ENCODE measurements at regions of chr3 and their contacts with region 1.

Region 1: GRCh38 chr3:49120438-49121131 is at the start of gene USP19:
- DNase-seq: peak; percentile 88 to 91
- ATAC-seq: peak; percentile 95 to 97
- H3K4me3 ChIP-seq: peak within 1 kb of the TSS; percentile 93
- H3K27ac ChIP-seq: peak within 1 kb of the TSS; percentile 93 to 99
- H3K4me1 ChIP-seq: peaks cover 14% of the 10 kb centered on the region
- CTCF ChIP-seq: no peak
- EP300 ChIP-seq: no peak
- POLR2A ChIP-seq: peak; percentile 62
- RAD21 ChIP-seq: no peak
- polyA plus RNA-seq, gene USP19: 28.8 and 30.5 TPM in 2 replicates

Region 2: GRCh38 chr3:49058011-49058410 is 62.6 kb before region 1 on chr3:
- CTCF ChIA-PET with region 1: no interaction called
- POLR2A ChIA-PET with region 1: no interaction called
- DNase-seq: no peak
- ATAC-seq: no peak
- H3K4me3 ChIP-seq: no peak overlapping the region
- H3K27ac ChIP-seq: no peak overlapping the region
- H3K4me1 ChIP-seq: no peaks in the 10 kb centered on the region
- CTCF ChIP-seq: no peak
- EP300 ChIP-seq: no peak
- POLR2A ChIP-seq: no peak
- RAD21 ChIP-seq: no peak

Region 3: DNA sequence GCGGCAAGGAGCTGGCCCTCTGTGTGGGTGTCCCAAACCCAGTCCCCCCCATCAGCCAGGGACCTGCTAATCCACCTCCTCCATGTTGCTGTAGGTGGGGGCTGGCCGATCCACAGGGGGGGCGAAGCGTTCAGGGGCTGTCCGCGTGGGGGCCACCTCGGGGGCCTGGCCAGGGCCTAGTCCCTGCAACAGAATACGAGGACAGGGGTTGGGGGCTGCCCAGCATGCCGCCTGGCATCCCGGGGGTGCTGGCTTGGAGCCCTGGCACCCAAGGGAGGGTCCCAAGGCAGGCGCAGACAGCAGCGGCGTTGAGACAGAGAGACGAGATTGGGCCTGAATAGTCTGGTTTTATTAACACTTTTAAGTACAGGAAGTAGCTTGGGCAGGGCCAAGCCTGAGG is 12.2 kb before region 1 on chr3:
- CTCF ChIA-PET with region 1: no interaction called
- POLR2A ChIA-PET with region 1: interaction called, 12 read pairs
- DNase-seq: no peak
- ATAC-seq: no peak
- H3K4me3 ChIP-seq: no peak overlapping the region
- H3K27ac ChIP-seq: no peak overlapping the region
- H3K4me1 ChIP-seq: peaks cover 5% of the 10 kb centered on the region; the same call in 1 of the 3 replicates
- CTCF ChIP-seq: no peak
- EP300 ChIP-seq: no peak
- POLR2A ChIP-seq: no peak
- RAD21 ChIP-seq: no peak

Region 4: GRCh38 chr3:49133226-49133951 is 12.8 kb after region 1 on chr3:
- CTCF ChIA-PET with region 1: interaction called, 4 read pairs
- POLR2A ChIA-PET with region 1: interaction called, 26 read pairs
- DNase-seq: peak; percentile 81 to 91
- ATAC-seq: peak; percentile 81 to 91
- H3K4me3 ChIP-seq: peak overlapping the region; percentile 80
- H3K27ac ChIP-seq: peak overlapping the region; percentile 99 to 100
- H3K4me1 ChIP-seq: peaks cover 18% of the 10 kb centered on the region
- CTCF ChIP-seq: no peak
- EP300 ChIP-seq: no peak
- POLR2A ChIP-seq: peak; percentile 36
- RAD21 ChIP-seq: no peak

Region 5: GRCh38 chr3:49173116-49173791 is 52.7 kb after region 1 on chr3:
- CTCF ChIA-PET with region 1: no interaction called
- POLR2A ChIA-PET with region 1: no interaction called
- DNase-seq: no peak
- ATAC-seq: no peak
- H3K4me3 ChIP-seq: no peak overlapping the region
- H3K27ac ChIP-seq: peak overlapping the region in 1 of 2 experiments; percentile 87; a peak in 1 of 6 replicates
- H3K4me1 ChIP-seq: peaks cover 20% of the 10 kb centered on the region
- CTCF ChIP-seq: no peak
- EP300 ChIP-seq: no peak
- POLR2A ChIP-seq: no peak
- RAD21 ChIP-seq: no peak

Region 6: DNA sequence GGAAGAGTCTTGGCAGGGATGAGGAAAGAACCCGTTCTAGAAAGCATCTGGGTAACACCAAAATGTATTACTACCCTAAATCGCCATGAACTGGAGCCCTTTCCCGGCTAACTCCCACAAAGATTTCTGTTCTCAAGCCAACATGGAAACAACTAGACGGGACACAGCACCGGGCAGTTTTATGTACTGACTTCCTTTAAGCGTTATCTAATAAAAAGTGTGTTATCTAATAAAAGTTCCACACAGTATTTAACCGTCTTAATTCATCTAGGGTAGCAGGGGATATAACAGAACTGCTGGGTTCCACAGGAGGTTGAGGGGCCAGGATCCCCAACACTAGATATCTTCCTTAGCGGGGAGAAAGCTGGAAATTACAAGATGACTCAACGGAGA is 156.8 kb after region 1 on chr3:
- CTCF ChIA-PET with region 1: no interaction called
- POLR2A ChIA-PET with region 1: no interaction called
- DNase-seq: no peak
- ATAC-seq: peak; percentile 29 to 36; a peak in 4 of 6 replicates
- H3K4me3 ChIP-seq: peak overlapping the region; percentile 46
- H3K27ac ChIP-seq: peak overlapping the region; percentile 73 to 95
- H3K4me1 ChIP-seq: peaks cover 4% of the 10 kb centered on the region; the same call in 2 of the 3 replicates
- CTCF ChIP-seq: no peak
- EP300 ChIP-seq: no peak
- POLR2A ChIP-seq: no peak
- RAD21 ChIP-seq: no peak

Region 7: GRCh38 chr3:49747792-49748480 is 627.4 kb after region 1 on chr3:
- CTCF ChIA-PET with region 1: no interaction called
- POLR2A ChIA-PET with region 1: no interaction called
- DNase-seq: no peak
- ATAC-seq: no peak
- H3K4me3 ChIP-seq: no peak overlapping the region
- H3K27ac ChIP-seq: no peak overlapping the region
- H3K4me1 ChIP-seq: peaks cover 18% of the 10 kb centered on the region
- CTCF ChIP-seq: no peak
- EP300 ChIP-seq: no peak
- POLR2A ChIP-seq: no peak
- RAD21 ChIP-seq: no peak